Activated CD4-positive, alpha-beta T cell treated with anti-CD3 and anti-CD28 coated beads for 36 hours (primary cell): ENCODE measurements at regions of chr1 and their contacts with region 1.

Region 1: DNA sequence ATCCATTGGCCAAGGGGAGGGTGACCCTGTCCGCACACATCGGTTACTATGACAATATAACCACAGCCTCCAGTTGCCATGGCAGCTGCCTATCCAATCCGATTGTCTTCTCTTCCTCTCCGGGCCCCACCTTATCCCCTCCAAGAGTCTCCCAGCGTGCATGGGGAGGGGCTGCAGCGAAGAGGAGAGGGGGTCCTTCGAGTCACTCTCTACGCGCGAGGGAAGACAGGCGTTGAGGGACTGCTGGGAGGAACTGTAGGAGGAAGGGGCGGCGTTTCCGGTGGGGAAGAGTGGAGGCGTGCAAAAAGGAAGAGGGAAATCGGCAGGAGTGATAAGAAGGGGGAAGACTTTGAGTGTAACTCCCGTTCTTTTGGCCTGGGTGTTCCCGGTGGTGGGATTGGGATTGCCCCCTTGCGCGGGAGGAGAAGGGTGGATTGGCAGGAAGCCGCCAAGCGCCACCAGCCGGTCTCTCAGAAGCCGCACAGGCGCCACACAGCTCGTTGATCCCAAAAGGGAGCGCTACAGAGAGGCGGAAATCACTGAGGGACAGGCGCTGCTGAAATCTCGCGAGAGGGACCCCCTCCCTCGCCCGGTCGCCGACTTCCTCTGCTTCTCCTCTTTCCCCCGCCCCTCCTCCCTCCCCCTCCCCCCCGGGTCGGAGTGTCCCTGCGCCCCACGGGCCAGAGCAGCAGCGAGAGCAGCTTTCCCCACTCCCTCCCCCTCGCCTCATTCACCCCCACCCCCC is 384 bp upstream of the SMG7 start:
- DNase-seq: peak; percentile 99
- ATAC-seq: peak; percentile 61
- H3K4me3 Mint-ChIP-seq: peak overlapping the region; percentile 86
- H3K27ac Mint-ChIP-seq: peak overlapping the region; percentile 99
- H3K4me1 Mint-ChIP-seq: peaks cover 26% of the 10 kb centered on the region
- H3K27me3 Mint-ChIP-seq: no peaks in the 10 kb centered on the region

Region 2: DNA sequence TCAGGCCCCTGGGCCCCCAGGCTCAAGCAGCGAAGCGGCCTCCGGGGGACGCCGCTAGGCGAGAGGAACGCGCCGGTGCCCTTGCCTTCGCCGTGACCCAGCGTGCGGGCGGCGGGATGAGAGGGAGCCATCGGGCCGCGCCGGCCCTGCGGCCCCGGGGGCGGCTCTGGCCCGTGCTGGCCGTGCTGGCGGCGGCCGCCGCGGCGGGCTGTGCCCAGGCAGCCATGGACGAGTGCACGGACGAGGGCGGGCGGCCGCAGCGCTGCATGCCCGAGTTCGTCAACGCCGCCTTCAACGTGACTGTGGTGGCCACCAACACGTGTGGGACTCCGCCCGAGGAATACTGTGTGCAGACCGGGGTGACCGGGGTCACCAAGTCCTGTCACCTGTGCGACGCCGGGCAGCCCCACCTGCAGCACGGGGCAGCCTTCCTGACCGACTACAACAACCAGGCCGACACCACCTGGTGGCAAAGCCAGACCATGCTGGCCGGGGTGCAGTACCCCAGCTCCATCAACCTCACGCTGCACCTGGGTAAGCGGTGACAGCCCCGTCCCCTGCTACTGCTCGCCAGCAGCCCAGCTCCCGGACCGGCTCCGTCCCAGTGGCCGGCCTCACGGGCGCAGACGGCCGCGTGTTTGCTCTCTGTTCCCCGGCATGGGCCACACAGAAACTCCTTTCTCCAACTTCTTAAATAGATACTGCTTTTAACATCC is 448.2 kb before region 1 on chr1:
- CTCF ChIA-PET with region 1: no interaction called
- POLR2A ChIA-PET with region 1: no interaction called
- intact Hi-C with region 1: loop called in 1 of 2 experiments (anchors 5 kb)
- DNase-seq: peak; percentile 70
- ATAC-seq: peak; percentile 74
- H3K4me3 Mint-ChIP-seq: peak overlapping the region; percentile 58
- H3K27ac Mint-ChIP-seq: no peak overlapping the region
- H3K4me1 Mint-ChIP-seq: peaks cover 10% of the 10 kb centered on the region
- H3K27me3 Mint-ChIP-seq: peaks cover 54% of the 10 kb centered on the region

Region 3: DNA sequence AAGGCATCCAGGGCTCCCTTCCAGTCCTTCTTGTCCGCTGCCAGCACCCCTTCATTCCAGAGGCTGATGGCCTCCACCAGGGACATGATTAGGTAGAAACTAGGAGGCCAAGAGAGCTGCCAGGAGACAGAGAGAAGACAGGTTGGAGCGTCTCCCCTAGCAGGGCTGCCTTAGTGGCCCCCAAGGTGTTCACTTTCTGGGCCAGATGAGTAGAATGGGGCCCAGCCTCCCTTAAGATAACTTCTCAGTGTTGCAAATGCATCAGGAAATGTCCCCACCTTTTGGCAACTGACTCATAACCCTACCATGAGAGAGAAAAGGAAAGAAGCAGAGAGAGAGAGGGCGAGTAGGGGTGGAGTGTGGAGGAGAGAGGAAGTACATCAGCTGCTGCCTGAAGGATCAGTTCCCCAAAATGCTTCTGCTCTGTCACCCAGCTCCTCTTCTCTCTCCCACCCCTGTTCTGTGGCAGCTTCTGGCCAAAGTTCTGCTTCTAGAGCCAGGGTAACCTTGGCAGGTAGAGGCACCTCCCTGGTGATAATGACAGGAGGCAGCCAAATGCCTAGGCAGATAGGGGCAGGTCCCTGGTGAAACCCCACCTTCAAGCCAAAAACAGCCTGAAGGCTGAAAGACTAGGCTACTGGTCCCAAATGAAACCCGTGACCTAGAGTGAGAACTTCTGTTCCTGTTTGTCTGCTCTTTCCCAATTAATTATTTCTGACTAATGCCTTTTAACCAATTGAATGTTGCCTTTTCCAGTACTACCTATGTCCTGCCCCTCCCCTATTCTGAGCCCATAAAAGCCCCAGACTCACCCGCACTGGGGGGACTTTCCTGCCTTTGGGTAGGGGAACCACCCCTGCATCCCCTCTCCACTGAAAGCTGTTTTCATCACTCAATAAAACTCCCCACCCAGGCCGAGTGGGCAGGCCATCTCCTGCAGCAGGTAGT is 118.6 kb after region 1 on chr1 and contains the start of gene NCF2:
- CTCF ChIA-PET with region 1: no interaction called
- POLR2A ChIA-PET with region 1: no interaction called
- intact Hi-C with region 1: loop called in 1 of 2 experiments (anchors 1 kb)
- DNase-seq: peak; percentile 74
- ATAC-seq: peak; percentile 92
- H3K4me3 Mint-ChIP-seq: peak within 1 kb of the TSS; percentile 62
- H3K27ac Mint-ChIP-seq: peak within 1 kb of the TSS; percentile 89
- H3K4me1 Mint-ChIP-seq: peaks cover 47% of the 10 kb centered on the region
- H3K27me3 Mint-ChIP-seq: no peaks in the 10 kb centered on the region
- total RNA-seq, gene NCF2: 8.7 to 9.0 TPM

Region 4: GRCh38 chr1:183956559-183957188 is 484.8 kb after region 1 on chr1:
- CTCF ChIA-PET with region 1: no interaction called
- POLR2A ChIA-PET with region 1: no interaction called
- intact Hi-C with region 1: loop called in 1 of 2 experiments (anchors 2 kb)
- DNase-seq: peak; percentile 67
- ATAC-seq: peak; percentile 99
- H3K4me3 Mint-ChIP-seq: no peak overlapping the region
- H3K27ac Mint-ChIP-seq: peak overlapping the region; percentile 77
- H3K4me1 Mint-ChIP-seq: peaks cover 7% of the 10 kb centered on the region
- H3K27me3 Mint-ChIP-seq: no peaks in the 10 kb centered on the region

Region 5: DNA sequence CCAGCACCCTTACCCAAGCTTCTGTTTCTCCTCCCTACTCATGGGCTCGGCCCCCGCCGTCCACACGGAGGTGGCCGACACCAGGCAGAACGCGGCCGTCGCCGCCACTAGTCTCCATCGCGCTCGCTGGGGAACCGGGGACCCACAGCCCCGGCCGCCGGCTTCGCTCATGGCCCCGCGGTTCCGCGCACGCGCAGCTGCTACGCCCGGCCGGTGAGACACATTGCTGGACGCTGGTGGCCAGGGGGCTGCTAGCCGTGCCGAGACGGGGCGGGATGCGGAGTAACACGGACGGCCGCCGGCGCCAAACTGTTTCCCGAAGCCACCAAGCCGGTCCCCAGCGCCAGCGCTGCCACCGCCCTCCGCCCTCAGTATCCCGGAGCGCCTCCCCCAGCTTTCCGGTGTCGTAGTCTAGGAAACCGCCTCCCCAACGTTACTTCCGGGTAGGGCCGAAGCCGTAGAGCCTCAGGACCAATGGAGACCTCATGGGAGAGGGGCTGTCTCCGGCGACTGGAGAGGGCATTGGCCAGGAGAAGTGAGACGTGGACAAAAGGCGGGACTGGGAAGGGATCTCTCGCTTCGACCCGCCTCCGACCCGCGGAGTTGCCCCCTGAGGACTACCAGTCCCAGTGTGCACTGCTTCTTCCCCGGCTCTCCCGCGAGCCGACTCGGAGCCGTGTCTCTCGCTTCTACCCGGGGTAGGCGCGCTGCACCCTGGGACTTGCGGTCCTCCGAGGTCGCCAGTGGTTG is 1282.7 kb after region 1 on chr1 and contains the start of gene EDEM3:
- CTCF ChIA-PET with region 1: no interaction called
- POLR2A ChIA-PET with region 1: no interaction called
- intact Hi-C with region 1: loop called in 1 of 2 experiments (anchors 2 kb)
- DNase-seq: peak; percentile 98
- ATAC-seq: peak; percentile 95
- H3K4me3 Mint-ChIP-seq: peak within 1 kb of the TSS; percentile 95
- H3K27ac Mint-ChIP-seq: peak within 1 kb of the TSS; percentile 93
- H3K4me1 Mint-ChIP-seq: peaks cover 44% of the 10 kb centered on the region
- H3K27me3 Mint-ChIP-seq: peaks cover 3% of the 10 kb centered on the region
- total RNA-seq, gene EDEM3: 14.0 to 15.2 TPM

Region 6: GRCh38 chr1:185317034-185317885 is 1845.3 kb after region 1 on chr1 and contains the start of gene IVNS1ABP:
- CTCF ChIA-PET with region 1: no interaction called
- POLR2A ChIA-PET with region 1: no interaction called
- intact Hi-C with region 1: loop called in 1 of 2 experiments (anchors 5 kb)
- DNase-seq: peak; percentile 97
- ATAC-seq: peak; percentile 81
- H3K4me3 Mint-ChIP-seq: peak within 1 kb of the TSS; percentile 84
- H3K27ac Mint-ChIP-seq: peak within 1 kb of the TSS; percentile 99
- H3K4me1 Mint-ChIP-seq: peaks cover 38% of the 10 kb centered on the region
- H3K27me3 Mint-ChIP-seq: no peaks in the 10 kb centered on the region
- total RNA-seq, gene IVNS1ABP: 116 to 129 TPM